Body of pancreas (tissue), 4 donors: ENCODE measurements at regions of chr17 and their contacts with region 1.

Region 1: DNA sequence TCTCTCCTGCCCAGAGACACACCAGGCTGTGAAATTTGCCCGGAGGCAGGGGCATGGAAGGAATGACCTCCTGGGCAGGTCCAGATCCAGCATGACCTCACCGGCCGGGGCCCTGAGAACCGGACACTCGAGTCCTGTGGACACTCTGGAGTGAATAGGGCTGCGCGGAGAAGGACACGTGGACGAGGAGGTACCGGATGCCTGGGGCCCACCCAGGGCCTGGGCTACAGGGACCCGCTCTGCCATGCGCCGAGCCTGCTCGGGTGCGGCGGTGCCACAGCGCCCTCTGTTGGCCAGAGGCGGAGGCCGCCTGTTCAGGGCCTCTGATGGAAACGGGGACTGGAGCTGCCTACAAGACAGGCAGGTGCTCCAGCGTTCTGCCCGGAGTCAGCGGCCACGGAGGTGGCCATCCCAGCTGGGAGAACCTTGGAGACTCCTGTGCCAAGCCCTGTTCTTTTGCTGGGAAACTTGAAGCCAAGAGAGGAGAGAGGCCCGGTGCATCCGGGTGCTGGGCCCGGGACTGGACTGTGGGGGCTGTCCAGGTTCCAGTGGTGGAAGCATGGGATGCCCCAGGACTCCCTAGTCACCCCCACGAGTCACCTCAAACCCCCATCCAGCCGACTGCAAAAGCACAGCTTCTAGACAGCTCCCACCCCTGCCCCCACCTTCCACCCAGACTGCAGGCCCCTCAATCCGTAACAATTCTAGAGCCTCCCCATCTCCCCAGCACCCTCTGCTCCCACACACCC is 19.3 kb upstream of the NXPH3 start:
- DNase-seq: peak; percentile 71 to 80 (median 76)
- ATAC-seq: peak; percentile 87
- H3K4me3 ChIP-seq: no peak overlapping the region
- H3K27ac ChIP-seq: no peak overlapping the region
- H3K4me1 ChIP-seq: peaks cover 6% of the 10 kb centered on the region
- H3K27me3 ChIP-seq: no peaks in the 10 kb centered on the region
- CTCF ChIP-seq: peak; percentile 90 to 99 (median 93)
- POLR2A ChIP-seq: no peak

Region 2: DNA sequence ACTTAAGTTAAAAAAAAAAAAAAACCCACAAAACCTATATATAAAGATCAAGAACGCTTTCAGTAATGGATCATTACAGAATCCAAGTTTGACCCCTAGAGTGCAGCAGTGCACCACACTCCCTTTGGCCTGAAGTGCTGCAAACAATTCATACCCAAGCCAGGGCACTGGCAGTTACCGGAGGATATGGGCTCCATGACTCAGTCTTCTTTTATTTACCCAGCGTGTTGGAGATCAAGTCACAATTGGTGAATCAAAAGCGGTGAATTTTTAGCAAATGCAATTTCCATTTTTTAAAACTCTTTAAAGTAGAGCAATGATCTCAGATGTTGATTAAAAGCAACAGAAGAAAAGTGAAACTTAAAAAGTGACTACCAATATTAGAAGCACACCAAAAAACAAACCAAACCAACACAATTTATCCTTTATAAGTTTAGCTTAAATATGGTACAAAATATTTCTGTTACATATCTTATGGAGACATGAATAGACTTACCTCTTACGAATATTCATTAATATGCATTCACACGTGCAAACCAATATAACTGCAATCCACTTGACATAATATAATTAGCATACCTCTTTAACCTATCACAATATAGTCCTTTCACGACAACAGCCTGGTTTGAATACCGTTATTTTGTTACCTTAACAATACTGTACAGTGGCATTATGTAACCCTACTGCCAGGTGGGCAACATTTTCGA is 240.7 kb before region 1 on chr17:
- intact Hi-C with region 1: loop called (anchors 10 kb)
- DNase-seq: peak; percentile 78 to 87 (median 82)
- ATAC-seq: peak; percentile 98
- H3K4me3 ChIP-seq: no peak overlapping the region
- H3K27ac ChIP-seq: peak overlapping the region in 1 of 4 donors; percentile 47
- H3K4me1 ChIP-seq: peaks cover 9% of the 10 kb centered on the region
- H3K27me3 ChIP-seq: no peaks in the 10 kb centered on the region
- CTCF ChIP-seq: peak; percentile 76 to 94 (median 88)
- POLR2A ChIP-seq: no peak

Region 3: DNA sequence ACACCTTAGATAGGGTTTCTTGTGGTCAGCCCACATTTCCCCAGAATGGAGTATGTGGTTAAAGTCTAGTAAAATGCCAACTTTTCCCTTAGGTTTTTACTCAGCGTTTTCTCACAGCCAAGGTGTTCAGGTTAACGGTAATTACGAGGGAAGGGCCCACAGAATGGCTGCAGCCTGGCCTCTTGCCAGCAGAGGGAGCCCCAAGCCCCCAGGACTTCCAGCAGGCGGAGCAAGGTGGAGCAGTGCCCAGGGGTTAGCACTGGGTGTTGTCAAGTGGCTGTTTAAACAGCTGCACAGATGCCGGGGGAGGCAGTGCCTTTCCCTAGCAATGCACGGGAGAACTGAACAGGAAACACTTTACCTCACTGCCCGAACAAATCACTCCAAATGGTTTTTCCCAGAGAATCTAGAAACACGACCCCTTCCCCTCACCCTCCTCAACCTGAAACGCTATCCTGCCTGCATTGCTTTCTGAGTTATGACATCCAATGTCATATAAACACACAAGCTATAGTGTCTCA is 148.4 kb before region 1 on chr17:
- intact Hi-C with region 1: loop called (anchors 10 kb)
- DNase-seq: peak; percentile 84 to 95 (median 92)
- ATAC-seq: peak; percentile 92
- H3K4me3 ChIP-seq: no peak overlapping the region
- H3K27ac ChIP-seq: peak overlapping the region in 3 of 4 donors; percentile 4 to 71 (median 25)
- H3K4me1 ChIP-seq: peaks cover 12% of the 10 kb centered on the region
- H3K27me3 ChIP-seq: no peaks in the 10 kb centered on the region
- CTCF ChIP-seq: peak; percentile 38 to 89 (median 66)
- POLR2A ChIP-seq: no peak

Region 4: GRCh38 chr17:49434821-49435670 is 121.4 kb before region 1 on chr17:
- intact Hi-C with region 1: loop called (anchors 5 kb)
- DNase-seq: peak; percentile 31 to 58 (median 56)
- ATAC-seq: peak; percentile 48
- H3K4me3 ChIP-seq: no peak overlapping the region
- H3K27ac ChIP-seq: no peak overlapping the region
- H3K4me1 ChIP-seq: no peaks in the 10 kb centered on the region
- H3K27me3 ChIP-seq: no peaks in the 10 kb centered on the region
- CTCF ChIP-seq: peak in 6 of 7 experiments; percentile 30 to 54 (median 44)
- POLR2A ChIP-seq: no peak

Region 5: GRCh38 chr17:49501504-49501903 is 54.9 kb before region 1 on chr17:
- intact Hi-C with region 1: loop called (anchors 5 kb)
- DNase-seq: no peak
- ATAC-seq: no peak
- H3K4me3 ChIP-seq: no peak overlapping the region
- H3K27ac ChIP-seq: no peak overlapping the region
- H3K4me1 ChIP-seq: peaks cover 15% of the 10 kb centered on the region
- H3K27me3 ChIP-seq: peaks cover 0 to 27% of the 10 kb centered on the region in 2 donors
- CTCF ChIP-seq: no peak
- POLR2A ChIP-seq: no peak

Region 6: GRCh38 chr17:49603720-49604119 is 47.3 kb after region 1 on chr17:
- intact Hi-C with region 1: no loop called
- DNase-seq: no peak
- ATAC-seq: no peak
- H3K4me3 ChIP-seq: no peak overlapping the region
- H3K27ac ChIP-seq: no peak overlapping the region
- H3K4me1 ChIP-seq: no peaks in the 10 kb centered on the region
- H3K27me3 ChIP-seq: no peaks in the 10 kb centered on the region
- CTCF ChIP-seq: no peak
- POLR2A ChIP-seq: no peak